Sciatic nerve (tissue), 2 donors: ENCODE measurements at regions of chr19 and their contacts with region 1.

Region 1: DNA sequence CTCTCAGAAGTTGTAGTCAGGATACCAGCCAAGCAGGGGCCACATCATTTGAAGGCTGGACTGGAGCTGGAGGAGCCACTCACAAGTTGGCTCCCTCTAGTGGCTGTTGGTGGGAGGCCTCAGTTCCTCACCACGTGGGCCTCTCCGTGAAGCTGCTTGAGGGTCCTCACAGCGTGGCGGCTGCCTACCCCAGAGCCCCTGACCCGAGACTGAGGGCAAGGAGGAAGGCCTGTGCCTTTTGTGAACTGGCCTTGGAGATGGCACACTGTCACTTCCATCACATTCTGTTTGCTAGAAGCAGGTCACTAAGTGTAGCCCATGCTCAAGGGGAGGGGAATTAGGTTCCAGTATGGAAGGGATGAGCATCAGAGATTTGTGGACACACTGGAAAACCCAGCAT is 14.6 kb downstream of the GNA11 start:
- DNase-seq: no peak
- ATAC-seq: peak; percentile 51

Region 2: DNA sequence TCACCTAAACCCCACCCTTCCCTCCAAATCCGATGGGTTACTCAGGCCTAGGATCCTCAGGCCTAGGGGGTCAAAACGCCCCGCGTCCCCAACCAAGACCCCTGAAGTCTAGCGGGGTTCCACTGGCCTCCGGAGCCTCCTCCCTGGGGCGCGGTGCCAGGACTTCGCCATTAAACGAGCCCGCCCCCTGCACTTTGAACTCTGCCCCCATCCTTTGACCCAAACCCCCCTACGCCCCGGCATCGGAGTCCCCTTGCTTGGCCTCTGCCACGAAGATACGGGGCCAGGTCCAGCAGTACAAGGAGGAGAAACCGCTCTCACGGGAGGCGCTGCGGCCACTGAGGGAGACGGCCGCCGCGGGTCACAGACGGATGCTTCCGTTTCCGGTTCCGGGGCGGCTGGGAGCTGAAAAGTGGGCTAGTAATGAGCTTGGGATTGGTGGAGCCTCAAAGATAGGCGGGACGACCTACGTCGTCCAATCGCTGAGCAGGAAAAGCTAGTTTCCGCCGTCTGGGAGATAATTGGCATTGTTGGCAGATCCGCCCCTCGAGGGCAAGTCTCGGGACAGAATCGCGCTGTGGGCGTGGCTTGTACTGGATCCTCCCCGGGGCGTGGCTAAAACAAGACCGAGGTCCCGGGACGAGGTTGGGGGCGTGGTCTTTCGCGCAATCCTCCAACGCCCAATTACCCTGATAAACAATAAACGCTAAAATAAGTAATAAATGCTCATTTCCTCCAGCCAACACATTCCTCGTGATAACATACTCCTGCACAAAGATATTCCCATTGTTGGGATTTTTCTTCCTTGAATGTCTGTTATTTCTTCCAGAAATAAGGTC is 158.3 kb before region 1 on chr19:
- intact Hi-C with region 1: loop called (anchors 10 kb)
- DNase-seq: peak; percentile 100
- ATAC-seq: peak; percentile 98

Region 3: DNA sequence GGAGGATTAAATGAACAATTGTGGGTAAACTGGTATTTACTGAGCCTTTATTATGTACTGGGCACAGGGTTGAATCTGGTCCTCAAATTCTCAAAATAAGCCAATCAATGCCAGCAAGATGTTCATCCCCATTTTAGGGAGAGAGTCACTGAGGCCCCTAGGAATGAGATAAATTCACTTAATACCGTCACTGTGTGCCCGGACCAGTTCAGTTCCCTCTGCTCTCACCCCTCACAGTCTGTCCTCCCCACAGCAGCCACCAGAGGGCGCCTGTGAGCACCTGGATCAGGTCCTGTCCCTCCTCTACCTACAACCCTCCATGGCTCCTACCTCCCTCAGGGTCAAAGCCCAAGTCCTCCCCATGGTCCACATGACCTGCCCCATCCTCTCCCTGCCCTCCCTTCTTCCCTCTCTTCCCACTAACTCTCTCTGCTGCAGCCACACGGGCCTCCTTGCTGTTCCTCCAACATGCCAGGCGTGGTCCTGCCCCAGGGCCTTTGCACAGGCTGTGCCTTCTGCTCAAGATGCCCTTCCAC is 215.6 kb after region 1 on chr19:
- intact Hi-C with region 1: no loop called
- DNase-seq: peak; percentile 78
- ATAC-seq: peak; percentile 49